Activated T-helper 1 cell treated with anti-CD3 and anti-CD28 coated beads, Interleukin-12 subunit alpha, Interleukin-12 subunit beta, Interleukin-2, Interleukin-4 antibody, amounts not matched to agents 30 ng/mL and 10 ng/mL and 1 ng/mL, durations not matched to agents 14 hours and 24 hours and 36 hours (primary cell): ENCODE measurements at regions of chr5 and their contacts with region 1.

Region 1: DNA sequence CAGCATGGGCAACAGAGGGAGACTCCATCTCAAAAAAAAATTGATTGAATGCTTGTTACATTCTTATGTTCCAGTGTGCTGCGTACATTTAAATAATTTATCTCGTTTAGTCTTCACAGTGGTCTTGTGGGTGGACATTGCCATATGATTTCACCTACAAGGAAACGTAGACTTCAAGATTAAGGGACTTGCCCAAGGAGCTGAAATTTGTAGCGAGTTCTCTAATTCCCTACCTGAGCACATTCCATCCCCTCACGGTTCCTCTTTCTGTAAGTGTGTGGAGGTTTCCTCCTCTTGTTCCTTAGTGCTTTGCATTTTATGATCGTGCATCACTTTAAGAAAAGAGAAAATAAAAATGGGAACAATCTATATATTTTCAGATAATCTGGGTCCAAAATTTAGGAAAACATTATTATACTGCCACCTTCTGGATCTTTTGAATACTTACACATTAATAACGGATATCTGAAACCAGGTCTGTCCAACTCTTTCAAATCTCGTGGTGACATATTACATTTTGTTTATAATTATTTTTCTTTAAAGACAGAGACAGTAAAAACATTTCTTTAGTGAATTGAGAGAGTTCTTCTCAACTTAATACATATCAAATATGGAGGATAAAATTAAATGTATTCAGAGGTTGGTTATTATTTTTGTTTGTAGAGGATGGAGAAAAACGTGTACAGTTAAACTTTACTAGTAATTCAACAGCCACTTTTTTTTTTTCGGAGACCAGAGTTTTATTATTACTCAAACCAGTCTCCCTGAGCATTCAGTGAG is 29.9 kb upstream of the C7 start:
- DNase-seq: no peak
- H3K4me3 Mint-ChIP-seq: no peak overlapping the region
- H3K27ac Mint-ChIP-seq: no peak overlapping the region
- H3K4me1 Mint-ChIP-seq: peaks cover 5% of the 10 kb centered on the region
- H3K27me3 Mint-ChIP-seq: peaks cover 10% of the 10 kb centered on the region

Region 2: GRCh38 chr5:39578887-39579497 is 1300.4 kb before region 1 on chr5:
- intact Hi-C with region 1: loop called (anchors 1 kb)
- DNase-seq: no peak
- H3K4me3 Mint-ChIP-seq: no peak overlapping the region
- H3K27ac Mint-ChIP-seq: no peak overlapping the region
- H3K4me1 Mint-ChIP-seq: peaks cover 8% of the 10 kb centered on the region
- H3K27me3 Mint-ChIP-seq: peaks cover 17% of the 10 kb centered on the region

Region 3: GRCh38 chr5:39714036-39714698 is 1165.2 kb before region 1 on chr5:
- intact Hi-C with region 1: loop called (anchors 1 kb)
- DNase-seq: no peak
- H3K4me3 Mint-ChIP-seq: no peak overlapping the region
- H3K27ac Mint-ChIP-seq: no peak overlapping the region
- H3K4me1 Mint-ChIP-seq: no peaks in the 10 kb centered on the region
- H3K27me3 Mint-ChIP-seq: peaks cover 5% of the 10 kb centered on the region

Region 4: GRCh38 chr5:40736103-40736875 is 143.1 kb before region 1 on chr5:
- intact Hi-C with region 1: loop called (anchors 1 kb)
- DNase-seq: no peak
- H3K4me3 Mint-ChIP-seq: no peak overlapping the region
- H3K27ac Mint-ChIP-seq: no peak overlapping the region
- H3K4me1 Mint-ChIP-seq: peaks cover 22% of the 10 kb centered on the region
- H3K27me3 Mint-ChIP-seq: no peaks in the 10 kb centered on the region

Region 5: GRCh38 chr5:40798012-40798855 is 81.1 kb before region 1 on chr5 and contains the start of gene PRKAA1:
- intact Hi-C with region 1: loop called (anchors 1 kb)
- DNase-seq: peak; percentile 87
- H3K4me3 Mint-ChIP-seq: peak within 1 kb of the TSS; percentile 91
- H3K27ac Mint-ChIP-seq: peak within 1 kb of the TSS; percentile 96
- H3K4me1 Mint-ChIP-seq: peaks cover 41% of the 10 kb centered on the region
- H3K27me3 Mint-ChIP-seq: no peaks in the 10 kb centered on the region
- total RNA-seq, gene PRKAA1: 56.6 and 59.0 TPM in 2 replicates

Region 6: GRCh38 chr5:41043109-41043747 is 163.9 kb after region 1 on chr5:
- intact Hi-C with region 1: no loop called
- DNase-seq: no peak
- H3K4me3 Mint-ChIP-seq: no peak overlapping the region
- H3K27ac Mint-ChIP-seq: no peak overlapping the region
- H3K4me1 Mint-ChIP-seq: no peaks in the 10 kb centered on the region
- H3K27me3 Mint-ChIP-seq: no peaks in the 10 kb centered on the region